H1 (cell line): ENCODE measurements at regions of chr19 and their contacts with region 1.

Region 1: GRCh38 chr19:41904118-41904870 is 21.3 kb downstream of the ARHGEF1 start:
- DNase-seq: no peak
- H3K4me3 ChIP-seq: no peak overlapping the region
- H3K27ac ChIP-seq: no peak overlapping the region
- H3K4me1 ChIP-seq: no peaks in the 10 kb centered on the region; a peak in 1 of 7 replicates
- H3K27me3 ChIP-seq: peaks cover 0 to 2% (median 1%) of the 10 kb centered on the region in 4 experiments; a peak in 3 of 7 replicates
- CTCF ChIP-seq: no peak
- EP300 ChIP-seq: no peak
- POLR2A ChIP-seq: no peak
- RAD21 ChIP-seq: no peak

Region 2: GRCh38 chr19:41726493-41726892 is 177.8 kb before region 1 on chr19:
- CTCF ChIA-PET with region 1: no interaction called
- POLR2A ChIA-PET with region 1: no interaction called
- DNase-seq: no peak
- H3K4me3 ChIP-seq: no peak overlapping the region
- H3K27ac ChIP-seq: no peak overlapping the region
- H3K4me1 ChIP-seq: no peaks in the 10 kb centered on the region
- H3K27me3 ChIP-seq: no peaks in the 10 kb centered on the region
- CTCF ChIP-seq: no peak
- EP300 ChIP-seq: no peak
- POLR2A ChIP-seq: no peak
- RAD21 ChIP-seq: no peak

Region 3: GRCh38 chr19:41859618-41860418 is 44.5 kb before region 1 on chr19 and contains the start of gene RPS19:
- CTCF ChIA-PET with region 1: interaction called, 4 read pairs
- POLR2A ChIA-PET with region 1: interaction called, 167 read pairs
- DNase-seq: peak; percentile 98 to 99
- H3K4me3 ChIP-seq: peak within 1 kb of the TSS; percentile 81 to 99 (median 96)
- H3K27ac ChIP-seq: peak within 1 kb of the TSS; percentile 95
- H3K4me1 ChIP-seq: peaks cover 3 to 26% (median 14%) of the 10 kb centered on the region in 4 experiments
- H3K27me3 ChIP-seq: no peaks in the 10 kb centered on the region
- CTCF ChIP-seq: peak; percentile 45 to 76 (median 54)
- EP300 ChIP-seq: no peak
- POLR2A ChIP-seq: peak; percentile 92 to 96
- RAD21 ChIP-seq: no peak
- total RNA-seq, gene RPS19: 2,817 and 2,831 TPM in 2 replicates

Region 4: DNA sequence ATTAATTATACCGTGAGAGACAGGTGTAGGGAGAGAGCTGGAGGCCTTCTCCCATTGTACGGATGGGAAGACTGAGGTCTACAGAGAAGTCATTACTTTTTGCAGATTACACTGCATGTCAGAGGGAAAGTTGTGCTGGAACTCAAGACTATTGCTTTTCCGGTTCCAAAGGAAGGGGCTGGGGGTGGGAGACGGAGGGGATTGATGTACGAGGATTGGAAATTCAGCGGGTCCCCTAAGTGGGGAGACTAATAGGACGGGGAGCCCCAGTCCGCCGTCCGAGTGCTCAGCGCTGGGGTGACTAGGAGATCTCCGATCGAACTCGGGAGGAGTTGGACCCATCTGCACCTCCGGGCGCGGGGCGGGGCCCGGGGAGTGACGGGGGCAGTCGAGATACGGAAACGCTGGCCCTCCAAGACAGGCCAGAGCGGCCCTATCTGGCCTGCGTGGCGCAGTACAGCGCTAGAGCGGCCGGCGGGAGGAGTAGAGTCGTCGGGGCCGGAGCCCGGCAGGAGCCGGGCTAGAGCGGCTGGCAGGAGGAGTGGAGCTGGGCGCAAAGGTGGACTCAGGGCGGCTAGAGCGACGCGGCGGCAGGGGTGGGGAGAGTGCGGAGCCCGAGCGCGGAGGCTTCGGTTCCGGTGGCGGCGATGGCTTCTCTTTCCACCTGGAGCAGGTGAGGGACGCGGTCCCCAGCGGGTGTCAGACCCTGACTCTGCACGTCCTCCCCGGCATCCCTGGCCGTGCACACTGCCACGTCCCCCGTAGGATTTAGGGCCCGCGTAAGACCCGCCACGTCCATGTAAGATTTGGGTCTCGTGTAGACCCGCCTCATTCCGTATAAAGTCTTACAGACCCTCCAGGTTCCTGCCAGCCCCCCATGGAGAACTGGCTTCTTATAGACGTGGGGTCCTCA is 20.2 kb before region 1 on chr19:
- CTCF ChIA-PET with region 1: interaction called, 11 read pairs
- POLR2A ChIA-PET with region 1: interaction called, 7 read pairs
- DNase-seq: peak; percentile 90 to 95
- H3K4me3 ChIP-seq: peak overlapping the region; percentile 81 to 97 (median 91)
- H3K27ac ChIP-seq: no peak overlapping the region
- H3K4me1 ChIP-seq: peaks cover 3 to 21% (median 12%) of the 10 kb centered on the region in 4 experiments
- H3K27me3 ChIP-seq: peaks cover 1 to 18% (median 17%) of the 10 kb centered on the region in 4 experiments; a peak in 6 of 7 replicates
- CTCF ChIP-seq: no peak; a peak in 1 of 4 replicates
- EP300 ChIP-seq: peak in 1 of 2 experiments; percentile 85; a peak in 1 of 3 replicates
- POLR2A ChIP-seq: peak in 1 of 2 experiments; percentile 76; a peak in 2 of 3 replicates
- RAD21 ChIP-seq: peak in 1 of 2 experiments; percentile 12; a peak in 1 of 4 replicates

Region 5: GRCh38 chr19:41893899-41894298 is 10.4 kb before region 1 on chr19:
- CTCF ChIA-PET with region 1: interaction called, 12 read pairs
- POLR2A ChIA-PET with region 1: interaction called, 14 read pairs
- DNase-seq: no peak
- H3K4me3 ChIP-seq: no peak overlapping the region
- H3K27ac ChIP-seq: no peak overlapping the region
- H3K4me1 ChIP-seq: peaks cover 0 to 5% (median 1%) of the 10 kb centered on the region in 4 experiments; a peak in 1 of 7 replicates
- H3K27me3 ChIP-seq: no peaks in the 10 kb centered on the region
- CTCF ChIP-seq: peak; percentile 10 to 53 (median 45); a peak in 3 of 4 replicates
- EP300 ChIP-seq: no peak
- POLR2A ChIP-seq: no peak
- RAD21 ChIP-seq: no peak; a peak in 1 of 4 replicates